ENCODE measurements at regions of chr11 and their contacts with region 1.

Region 1: DNA sequence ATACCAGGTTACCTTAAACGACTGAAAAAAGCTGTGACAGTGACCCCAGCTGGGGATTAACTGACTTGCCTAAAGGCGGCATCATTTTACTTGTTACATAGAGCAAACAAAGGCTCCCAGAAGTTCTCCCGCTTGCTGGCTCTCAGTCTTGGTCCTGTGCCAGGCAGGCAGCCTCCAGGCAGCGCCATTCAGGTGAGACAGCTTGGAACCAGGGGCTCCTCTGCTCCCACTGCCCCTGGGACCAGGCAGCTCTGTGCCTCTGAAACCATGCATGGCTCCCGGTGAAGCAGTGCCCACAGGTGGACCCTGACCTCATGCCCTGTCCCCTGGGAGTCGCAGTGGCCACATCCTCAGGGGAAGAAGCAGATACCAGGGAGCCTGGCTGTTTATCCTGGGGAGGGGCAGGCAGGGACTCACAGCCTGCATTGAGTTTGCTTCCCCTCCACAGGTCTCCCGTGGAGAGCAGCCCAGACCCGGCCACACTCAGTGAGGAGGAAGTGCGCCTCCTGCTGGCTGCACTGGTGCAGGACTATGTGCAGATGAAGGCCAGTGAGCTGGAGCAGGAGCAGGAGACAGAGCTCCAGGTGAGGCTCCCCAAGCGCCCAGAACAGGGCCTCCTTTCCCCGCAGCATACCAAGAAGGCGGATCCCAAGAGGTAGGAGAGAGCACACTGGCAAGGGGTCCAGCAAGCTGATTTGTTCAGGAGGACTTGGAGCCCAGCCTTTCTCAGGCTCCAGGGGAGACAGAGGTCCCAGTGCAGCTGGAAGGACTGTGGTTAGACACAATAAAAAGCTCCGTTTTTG is 15.6 kb upstream of the CYP2R1 start:
- DNase-seq: no peak
- H3K4me3 ChIP-seq: no peak overlapping the region
- CTCF ChIP-seq: peak; percentile 68

Region 2: DNA sequence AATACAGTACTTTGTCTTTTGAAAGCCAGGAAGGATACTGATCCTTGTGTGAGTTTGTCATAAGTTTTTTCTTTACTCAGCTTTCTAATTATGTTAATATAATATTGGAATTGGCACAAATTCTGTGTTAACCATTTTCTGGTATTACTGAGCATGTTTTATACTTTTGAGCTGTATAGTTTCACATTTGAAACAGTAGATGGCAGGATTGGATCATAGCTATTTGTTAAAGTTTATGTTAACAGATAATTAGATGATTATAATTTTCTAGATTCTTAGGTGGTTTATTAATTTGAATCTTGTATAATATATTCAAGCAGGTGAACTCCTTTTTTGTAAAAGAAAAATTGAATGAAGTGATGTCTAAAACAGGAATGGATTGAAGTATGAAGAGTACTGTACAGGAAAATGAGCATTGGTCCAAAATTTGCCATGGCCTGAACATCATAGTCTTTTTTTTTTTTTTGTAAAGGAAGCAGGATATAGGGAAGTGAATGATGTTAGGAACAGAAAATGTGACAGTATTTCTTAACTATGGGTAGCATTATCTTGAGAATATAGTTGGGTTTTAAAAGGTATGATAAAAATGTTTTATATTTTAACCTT is 117.6 kb before region 1 on chr11:
- CTCF ChIA-PET with region 1: interaction called, 159 read pairs
- POLR2A ChIA-PET with region 1: no interaction called
- DNase-seq: no peak
- H3K4me3 ChIP-seq: no peak overlapping the region
- CTCF ChIP-seq: no peak

Region 3: GRCh38 chr11:14892036-14892567 is 15.5 kb before region 1 on chr11 and contains the start of gene CYP2R1:
- CTCF ChIA-PET with region 1: interaction called, 94 read pairs
- POLR2A ChIA-PET with region 1: no interaction called
- DNase-seq: peak; percentile 80
- H3K4me3 ChIP-seq: peak within 1 kb of the TSS; percentile 89
- CTCF ChIP-seq: no peak

Region 4: GRCh38 chr11:14930369-14930768 is 22.8 kb after region 1 on chr11:
- CTCF ChIA-PET with region 1: interaction called, 82 read pairs
- POLR2A ChIA-PET with region 1: no interaction called
- DNase-seq: no peak
- H3K4me3 ChIP-seq: no peak overlapping the region
- CTCF ChIP-seq: no peak

Region 5: GRCh38 chr11:15016200-15016599 is 108.6 kb after region 1 on chr11:
- CTCF ChIA-PET with region 1: no interaction called
- POLR2A ChIA-PET with region 1: no interaction called
- DNase-seq: no peak
- H3K4me3 ChIP-seq: no peak overlapping the region
- CTCF ChIP-seq: no peak

Region 6: DNA sequence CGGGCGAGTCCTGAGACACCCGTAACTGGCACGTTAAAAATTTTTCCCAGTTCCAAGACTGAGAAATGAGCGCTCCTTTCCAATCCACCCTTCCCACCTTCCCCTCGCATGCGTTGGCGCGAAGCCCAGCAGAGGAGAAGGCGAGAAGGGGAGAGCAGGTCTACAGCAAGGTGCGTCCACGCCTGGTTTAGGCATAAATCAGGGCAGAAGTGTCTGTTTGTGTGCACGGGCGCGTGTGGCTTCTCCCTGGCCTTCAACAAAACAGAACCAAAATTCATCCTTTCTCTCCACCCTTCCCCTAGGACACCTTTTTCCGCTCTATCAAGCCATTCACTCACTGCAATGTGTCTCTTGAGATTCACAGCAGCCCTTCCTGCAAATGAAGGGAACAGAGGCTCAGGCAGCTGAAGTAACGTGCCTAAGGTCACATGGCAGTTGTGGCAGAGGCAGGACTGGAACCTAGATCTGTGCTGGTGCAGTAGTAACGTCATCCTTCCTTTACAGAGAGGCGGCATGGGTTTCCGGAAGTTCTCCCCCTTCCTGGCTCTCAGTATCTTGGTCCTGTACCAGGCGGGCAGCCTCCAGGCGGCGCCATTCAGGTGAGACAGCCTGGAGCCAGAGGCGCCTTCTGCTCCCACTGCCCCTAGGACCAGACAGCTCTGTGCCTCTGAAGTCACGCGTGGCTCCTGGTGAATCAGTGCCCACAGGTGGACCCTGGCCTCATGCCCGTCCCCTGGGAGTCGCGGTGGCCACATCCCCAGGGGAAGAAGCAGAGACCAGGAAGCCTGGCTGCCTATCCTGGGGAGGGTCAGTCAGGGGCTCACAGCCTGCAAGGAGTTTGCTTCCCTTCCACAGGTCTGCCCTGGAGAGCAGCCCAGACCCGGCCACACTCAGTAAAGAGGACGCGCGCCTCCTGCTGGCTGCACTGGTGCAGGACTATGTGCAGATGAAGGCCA is 166.9 kb after region 1 on chr11:
- CTCF ChIA-PET with region 1: interaction called, 110 read pairs
- POLR2A ChIA-PET with region 1: no interaction called
- DNase-seq: no peak
- H3K4me3 ChIP-seq: peak overlapping the region; percentile 29; the same call in 1 of the 2 replicates
- CTCF ChIP-seq: peak; percentile 82

Measured in AG04449 (cell line).